ENCODE measurements at regions of chr12 and their contacts with region 1.

Region 1: GRCh38 chr12:45728630-45729232 is 775 bp upstream of the ARID2 start:
- DNase-seq: peak; percentile 87
- H3K4me3 ChIP-seq: peak overlapping the region; percentile 84 to 98 (median 92)
- H3K27ac ChIP-seq: peak overlapping the region; percentile 99 to 100 (median 100)
- H3K4me1 ChIP-seq: peaks cover 6 to 56% (median 27%) of the 10 kb centered on the region in 3 donors
- H3K27me3 ChIP-seq: no peaks in the 10 kb centered on the region
- CTCF ChIP-seq: peak; percentile 83 to 98 (median 94)
- POLR2A ChIP-seq: peak in 3 of 4 donors; percentile 67 to 96 (median 92)

Region 2: DNA sequence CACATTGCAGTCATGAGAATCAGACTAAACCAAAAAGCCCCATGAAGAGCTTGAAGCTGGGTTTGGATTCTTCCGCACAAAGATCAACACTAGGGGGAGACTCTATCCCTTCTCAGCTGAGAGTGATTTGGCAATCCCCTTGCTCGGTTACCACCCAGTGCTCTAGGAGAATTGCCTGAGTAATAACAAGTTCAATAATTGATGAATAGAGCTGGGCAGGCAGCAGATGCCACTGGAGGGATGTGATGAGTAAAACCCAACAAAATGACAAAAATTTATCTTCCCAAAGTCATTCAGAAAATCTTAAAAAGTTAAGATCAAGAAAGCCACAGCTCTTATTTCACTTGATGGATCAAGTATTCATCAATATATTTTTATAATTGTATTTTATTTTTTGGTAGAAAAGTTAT is 184.8 kb before region 1 on chr12:
- intact Hi-C with region 1: loop called (anchors 10 kb)
- DNase-seq: no peak
- H3K4me3 ChIP-seq: no peak overlapping the region
- H3K27ac ChIP-seq: no peak overlapping the region
- H3K4me1 ChIP-seq: peaks cover 0 to 5% (median 0%) of the 10 kb centered on the region in 3 donors
- H3K27me3 ChIP-seq: no peaks in the 10 kb centered on the region
- CTCF ChIP-seq: peak; percentile 27 to 81 (median 70)
- POLR2A ChIP-seq: no peak